Dorsolateral prefrontal cortex (tissue), 120 donors: ENCODE measurements at regions of chr22 and their contacts with region 1.

Region 1: GRCh38 chr22:27804470-27805297 is 3.1 kb upstream of the MN1 start:
- DNase-seq: peak; percentile 28 to 89 (median 83)
- H3K4me3 ChIP-seq: peak overlapping the region in 15 of 59 donors; percentile 4 to 30 (median 12)
- H3K27ac ChIP-seq: peak overlapping the region in 6 of 59 donors; percentile 10 to 39 (median 23)
- H3K27me3 ChIP-seq: peaks cover 0 to 12% (median 5%) of the 10 kb centered on the region in 45 donors
- CTCF ChIP-seq: peak; percentile 55 to 93 (median 82)

Region 2: DNA sequence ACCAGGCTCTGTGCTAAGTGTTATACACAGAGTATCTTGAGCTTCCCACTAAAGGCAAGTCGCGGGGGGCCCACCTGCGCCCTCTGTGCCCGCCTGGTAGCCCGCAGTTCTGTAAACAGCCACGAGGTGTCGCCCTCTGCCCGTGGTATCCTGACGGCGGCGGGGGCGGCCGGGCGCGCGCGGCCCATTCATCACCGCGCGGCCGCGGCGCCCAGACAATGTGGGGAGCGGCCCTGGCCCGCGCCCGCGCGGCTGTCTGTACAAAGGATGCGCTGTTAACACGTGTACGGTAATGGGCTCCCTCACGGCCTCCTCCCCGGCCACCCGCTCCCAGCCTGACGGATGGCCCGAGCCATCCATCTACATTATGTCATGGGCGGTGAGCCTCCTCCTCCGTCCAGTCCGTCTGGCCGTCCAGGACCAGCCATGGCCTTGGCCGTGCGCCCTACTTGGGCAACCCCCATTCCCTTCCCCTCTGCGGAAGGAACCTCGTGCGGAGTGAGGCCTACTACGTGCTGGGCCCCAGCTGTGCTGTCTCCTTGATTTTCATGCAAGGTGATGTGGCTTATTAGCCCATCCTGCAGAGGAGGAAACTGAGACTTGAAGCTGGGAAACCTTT is 1047.9 kb before region 1 on chr22:
- intact Hi-C with region 1: loop called (anchors 2 to 5 kb)
- DNase-seq: peak in 9 of 10 donors; percentile 49 to 78 (median 67)
- H3K4me3 ChIP-seq: peak overlapping the region; percentile 4 to 64 (median 40)
- H3K27ac ChIP-seq: peak overlapping the region in 29 of 59 donors; percentile 8 to 79 (median 55)
- H3K27me3 ChIP-seq: no peaks in the 10 kb centered on the region
- CTCF ChIP-seq: peak in 55 of 56 donors; percentile 70 to 100 (median 94)

Region 3: DNA sequence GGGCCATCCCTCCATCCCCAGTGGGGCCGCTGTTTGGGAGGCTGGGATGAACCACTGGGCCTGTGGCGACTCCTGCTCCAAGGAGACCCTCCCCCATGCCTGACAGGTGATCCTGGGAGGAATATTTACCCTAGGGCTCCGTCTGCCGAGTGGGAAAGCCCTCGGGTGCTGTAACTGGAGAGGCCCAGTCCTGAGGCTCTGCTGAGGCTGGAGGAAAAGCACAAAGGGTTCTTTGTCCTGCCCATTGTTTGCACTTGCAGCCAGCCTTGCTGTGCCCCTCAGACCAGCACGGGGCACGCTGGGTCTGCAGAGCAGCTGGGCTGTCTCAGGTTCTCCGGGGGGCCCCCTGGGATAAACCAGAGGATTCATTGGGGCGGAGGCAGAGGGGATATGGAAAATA is 324.2 kb before region 1 on chr22:
- intact Hi-C with region 1: loop called in 1 of 2 experiments (anchors 5 kb)
- DNase-seq: peak in 9 of 10 donors; percentile 31 to 75 (median 57)
- H3K4me3 ChIP-seq: no peak overlapping the region
- H3K27ac ChIP-seq: peak overlapping the region in 45 of 59 donors; percentile 13 to 86 (median 67)
- H3K27me3 ChIP-seq: peaks cover 0 to 9% (median 0%) of the 10 kb centered on the region in 45 donors
- CTCF ChIP-seq: peak in 10 of 56 donors; percentile 10 to 39 (median 18)

Region 4: DNA sequence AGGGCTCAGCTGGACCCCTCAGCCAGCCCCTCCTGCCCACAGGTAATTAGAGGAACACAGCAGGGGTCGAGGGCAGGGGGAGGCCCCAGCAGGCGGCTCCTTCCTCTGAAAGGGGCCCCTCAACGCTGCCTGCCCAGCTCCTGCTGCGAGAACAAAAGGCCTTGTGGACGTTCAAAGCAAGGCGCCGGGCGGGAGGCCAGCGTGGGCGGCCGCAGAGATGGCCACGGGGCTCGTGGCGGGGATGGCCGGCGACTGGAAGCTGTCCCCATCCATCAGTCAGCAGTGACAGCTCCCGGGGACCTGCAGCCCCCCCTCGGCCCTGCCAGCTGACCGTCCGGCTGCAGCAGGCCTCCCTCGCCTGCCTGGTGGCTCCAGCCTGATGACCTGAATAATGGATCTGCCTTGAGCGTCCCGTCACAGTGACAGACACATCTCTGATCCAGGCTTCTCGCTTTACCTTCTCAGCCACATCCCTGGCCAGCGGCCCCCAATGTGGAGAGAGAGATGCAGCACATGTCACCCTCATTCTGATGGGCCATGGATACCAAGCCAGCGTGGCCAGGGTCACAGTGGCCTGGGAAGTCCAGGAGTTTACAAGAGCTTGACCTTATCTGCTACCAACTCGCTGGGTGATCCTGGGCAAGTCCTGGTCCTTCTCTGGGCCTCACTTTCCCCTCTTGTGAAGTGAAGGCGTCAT is 162.4 kb before region 1 on chr22:
- intact Hi-C with region 1: loop called in 1 of 2 experiments (anchors 5 kb)
- DNase-seq: peak; percentile 23 to 96 (median 94)
- H3K4me3 ChIP-seq: peak overlapping the region in 1 of 59 donors; percentile 9
- H3K27ac ChIP-seq: peak overlapping the region; percentile 72 to 99 (median 95)
- H3K27me3 ChIP-seq: no peaks in the 10 kb centered on the region
- CTCF ChIP-seq: peak in 24 of 56 donors; percentile 8 to 54 (median 30)

Region 5: GRCh38 chr22:27673839-27674238 is 130.8 kb before region 1 on chr22:
- intact Hi-C with region 1: no loop called
- DNase-seq: peak in 7 of 10 donors; percentile 41 to 71 (median 52)
- H3K4me3 ChIP-seq: peak overlapping the region in 7 of 59 donors; percentile 8 to 28 (median 21)
- H3K27ac ChIP-seq: peak overlapping the region in 48 of 59 donors; percentile 10 to 91 (median 70)
- H3K27me3 ChIP-seq: peaks cover 0 to 7% (median 0%) of the 10 kb centered on the region in 45 donors
- CTCF ChIP-seq: peak in 1 of 56 donors; percentile 16

Region 6: GRCh38 chr22:27761665-27762064 is 43.0 kb before region 1 on chr22:
- intact Hi-C with region 1: no loop called
- DNase-seq: no peak
- H3K4me3 ChIP-seq: no peak overlapping the region
- H3K27ac ChIP-seq: peak overlapping the region in 1 of 59 donors; percentile 4
- H3K27me3 ChIP-seq: no peaks in the 10 kb centered on the region
- CTCF ChIP-seq: no peak